AG04449 (cell line): ENCODE measurements at regions of chr5 and their contacts with region 1.

Region 1: DNA sequence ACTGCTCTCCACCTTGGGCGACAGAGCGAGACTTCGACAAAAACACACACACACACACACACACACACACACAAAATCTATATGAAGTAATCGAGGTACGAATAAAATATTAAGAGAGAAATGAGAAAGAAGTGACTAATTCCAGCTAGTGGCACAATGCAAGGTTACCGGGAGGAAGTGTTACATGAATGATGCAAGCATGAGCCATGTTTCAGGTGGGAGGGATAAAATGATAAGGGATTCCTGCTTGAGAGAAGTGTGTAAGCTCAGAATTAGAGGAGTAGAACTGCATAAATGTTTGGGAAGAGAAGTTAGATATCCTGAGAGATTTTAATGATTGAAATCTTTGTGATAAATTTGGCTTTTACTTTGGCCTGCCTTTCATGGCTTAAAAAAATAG is 18.8 kb downstream of the HAPLN1 start:
- DNase-seq: no peak
- H3K4me3 ChIP-seq: no peak overlapping the region
- CTCF ChIP-seq: no peak

Region 2: GRCh38 chr5:83712001-83712601 is 10.2 kb after region 1 on chr5:
- CTCF ChIA-PET with region 1: interaction called, 29 read pairs
- POLR2A ChIA-PET with region 1: no interaction called
- DNase-seq: no peak
- H3K4me3 ChIP-seq: no peak overlapping the region
- CTCF ChIP-seq: peak; percentile 56

Region 3: GRCh38 chr5:83777856-83778255 is 76.0 kb after region 1 on chr5:
- CTCF ChIA-PET with region 1: no interaction called
- POLR2A ChIA-PET with region 1: no interaction called
- DNase-seq: no peak
- H3K4me3 ChIP-seq: no peak overlapping the region
- CTCF ChIP-seq: no peak